Cardiac septum (tissue), 1 donor: ENCODE measurements at regions of chr17 and their contacts with region 1.

Region 1: GRCh38 chr17:76714822-76715495 is 4.2 kb upstream of the MXRA7 start:
- DNase-seq: peak; percentile 88

Region 2: GRCh38 chr17:76523084-76524037 is 191.6 kb before region 1 on chr17:
- intact Hi-C with region 1: loop called (anchors 5 kb)
- DNase-seq: peak; percentile 94

Region 3: GRCh38 chr17:76540381-76541300 is 174.3 kb before region 1 on chr17:
- intact Hi-C with region 1: loop called (anchors 5 kb)
- DNase-seq: peak; percentile 96

Region 4: DNA sequence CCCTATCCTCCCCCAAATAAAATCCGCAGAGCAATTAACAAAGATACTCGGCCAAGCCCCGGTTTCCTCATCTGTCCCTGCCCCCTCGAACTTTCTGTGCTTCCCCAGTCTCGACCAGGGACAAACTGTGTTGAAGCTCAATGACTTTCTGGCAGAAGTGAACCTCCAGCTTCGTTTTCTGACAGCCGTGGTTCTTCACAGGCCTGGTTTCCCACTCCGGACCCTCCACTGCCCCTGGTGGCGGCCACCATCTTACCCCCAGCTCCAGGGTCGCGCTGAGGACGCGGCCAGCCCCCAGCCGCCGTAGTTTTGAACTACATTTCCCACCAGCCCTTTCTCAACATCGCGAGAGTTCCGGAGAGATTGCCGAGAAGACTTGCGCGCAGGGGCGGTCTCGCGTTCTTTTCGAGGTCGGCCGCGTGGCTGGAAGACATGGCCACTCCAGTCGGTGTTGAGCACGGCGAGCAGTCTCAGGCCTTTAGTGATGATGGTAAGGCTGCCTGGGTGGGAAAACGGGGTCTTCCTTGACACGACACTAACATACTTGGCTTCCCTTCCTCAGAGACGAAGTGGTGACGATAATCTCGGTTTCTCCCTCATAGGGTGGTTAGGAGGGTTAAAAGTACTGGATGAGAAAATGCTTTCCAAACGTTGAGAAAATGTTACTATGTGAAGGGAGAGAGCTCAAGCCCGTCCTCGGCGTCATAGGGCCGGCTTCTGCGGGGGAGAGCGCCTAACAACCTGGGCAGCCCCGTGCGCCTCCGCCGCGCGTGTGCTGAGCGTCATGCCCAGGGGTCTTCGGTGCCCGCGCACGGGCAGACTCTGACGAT is 157.4 kb before region 1 on chr17:
- intact Hi-C with region 1: loop called (anchors 5 kb)
- DNase-seq: peak; percentile 97

Region 5: DNA sequence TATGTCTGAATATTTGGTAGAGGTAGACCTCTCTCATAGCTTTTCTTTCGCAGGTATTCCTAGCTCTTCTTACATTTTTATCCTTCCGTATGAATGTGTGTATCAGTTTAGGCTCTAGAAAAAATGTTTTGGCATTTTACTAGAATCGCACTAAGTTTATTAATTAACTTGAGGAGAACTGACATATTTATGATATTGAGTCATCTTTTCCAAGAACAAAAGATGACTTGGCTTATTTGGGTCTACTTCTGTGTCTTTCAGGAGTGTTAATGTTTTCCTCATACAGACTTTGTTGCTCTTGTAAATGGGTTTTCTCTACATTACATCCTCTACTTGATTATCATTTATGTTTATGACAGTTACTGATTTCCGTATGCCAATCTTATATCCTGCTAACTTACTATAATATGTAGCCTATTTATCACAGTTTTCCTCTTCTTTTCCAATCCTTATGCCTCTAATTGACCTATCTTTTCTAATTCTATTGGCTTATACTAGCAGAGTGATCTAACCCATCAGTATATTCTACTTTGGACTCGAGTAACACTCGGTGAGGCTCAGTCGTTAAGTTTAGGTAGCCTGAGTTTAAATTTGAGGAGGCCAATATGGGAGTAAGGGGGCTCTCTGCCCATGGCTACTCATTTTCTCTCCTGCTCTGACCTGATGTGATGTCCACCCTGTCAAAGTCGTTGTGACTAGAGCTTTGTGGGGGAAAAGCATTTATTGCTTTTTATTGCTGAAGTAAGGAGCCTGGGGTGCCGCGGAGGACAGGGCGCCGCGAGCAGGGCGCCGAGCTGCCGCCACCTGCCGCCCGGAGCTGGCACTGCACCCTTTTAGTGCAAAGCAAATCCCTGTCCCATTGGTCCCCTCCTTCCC is 91.5 kb before region 1 on chr17:
- intact Hi-C with region 1: loop called (anchors 5 kb)
- DNase-seq: peak; percentile 91

Region 6: GRCh38 chr17:76671123-76671911 is 43.6 kb before region 1 on chr17:
- intact Hi-C with region 1: loop called (anchors 5 kb)
- DNase-seq: peak; percentile 100

Region 7: GRCh38 chr17:76681222-76682137 is 33.5 kb before region 1 on chr17:
- intact Hi-C with region 1: loop called (anchors 5 kb)
- DNase-seq: peak; percentile 87